ENCODE measurements at regions of chr1 and their contacts with region 1.

Region 1: DNA sequence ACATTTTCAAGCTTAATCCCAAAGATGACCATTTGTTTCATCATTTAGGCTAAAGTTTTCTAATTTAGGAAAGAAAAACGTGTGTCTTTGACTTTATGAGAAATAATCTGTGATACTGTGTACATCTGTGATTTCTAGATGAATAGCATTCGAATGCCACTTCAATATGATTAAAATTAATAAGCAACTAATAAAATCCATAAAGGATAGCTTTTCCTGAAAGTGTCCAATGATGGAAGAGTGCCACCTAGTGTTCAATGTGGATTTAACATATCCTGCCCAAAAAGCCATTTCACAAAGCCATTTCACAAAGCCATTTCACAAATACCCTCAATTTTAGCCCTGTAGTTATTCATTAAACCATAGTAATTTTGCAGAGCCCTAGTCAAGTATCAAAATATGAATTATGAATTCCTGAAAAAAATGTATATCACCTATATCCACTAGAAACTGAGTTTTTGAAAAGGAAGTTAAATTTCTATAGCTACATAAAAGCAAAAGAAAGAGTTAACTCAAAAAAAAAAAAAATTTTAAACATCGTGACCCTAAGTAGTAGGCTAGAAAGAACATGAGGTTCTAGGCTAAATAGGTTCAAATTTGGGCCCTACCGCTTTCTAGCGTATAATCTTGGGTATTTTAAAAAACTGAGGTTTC is 19.1 kb downstream of the NME7 start:
- DNase-seq: peak; percentile 27
- H3K4me3 ChIP-seq: no peak overlapping the region
- H3K27ac ChIP-seq: no peak overlapping the region
- H3K27me3 ChIP-seq: no peaks in the 10 kb centered on the region
- CTCF ChIP-seq: peak; percentile 73

Region 2: DNA sequence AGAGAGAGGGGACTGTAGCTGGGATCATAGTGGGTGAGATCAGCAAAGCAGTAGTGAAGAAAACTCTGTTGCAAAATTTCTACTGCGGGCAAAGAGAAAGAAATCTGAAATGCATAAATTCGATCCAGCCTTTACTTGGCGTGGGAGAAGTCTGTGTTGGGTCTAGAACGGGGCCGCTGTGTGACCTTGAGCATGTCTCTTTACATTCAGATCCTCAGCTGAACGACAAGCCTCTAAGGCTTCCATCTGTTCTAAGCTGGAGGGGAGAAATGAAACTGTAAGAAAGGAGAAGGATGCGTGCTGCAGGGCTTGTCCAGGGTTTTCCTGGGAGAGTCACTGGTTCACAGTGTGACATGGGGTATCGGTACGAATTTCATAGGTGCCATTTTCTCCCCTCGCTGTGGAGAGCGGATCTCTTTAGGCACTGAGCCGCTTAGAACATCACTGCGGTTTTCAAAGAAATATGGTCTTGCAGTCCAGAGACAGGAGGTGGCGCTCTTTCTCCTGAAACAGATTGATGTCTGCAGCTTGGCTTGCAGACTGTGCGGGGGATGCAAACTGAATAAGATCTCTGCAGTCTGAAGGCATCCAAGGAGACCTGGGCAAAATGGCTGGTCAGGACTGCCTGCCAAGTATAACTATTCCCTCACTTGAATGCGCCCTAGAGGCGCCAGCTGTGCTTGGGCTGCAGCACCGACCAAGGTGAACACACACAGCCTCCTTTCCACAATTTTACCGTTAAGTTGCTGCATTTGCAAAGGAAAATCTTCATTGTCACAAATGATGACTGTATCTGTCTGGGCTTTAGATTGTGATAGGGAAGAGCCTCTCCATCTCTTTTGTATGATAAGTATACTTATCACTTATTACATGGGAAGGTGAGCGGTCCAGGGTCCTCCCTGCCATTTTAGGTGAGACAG is 908.8 kb before region 1 on chr1:
- CTCF ChIA-PET with region 1: interaction called, 10 read pairs
- POLR2A ChIA-PET with region 1: no interaction called
- DNase-seq: peak; percentile 73
- H3K4me3 ChIP-seq: peak overlapping the region; percentile 18
- H3K27ac ChIP-seq: no peak overlapping the region
- H3K27me3 ChIP-seq: peaks cover 3% of the 10 kb centered on the region
- CTCF ChIP-seq: peak; percentile 90

Region 3: DNA sequence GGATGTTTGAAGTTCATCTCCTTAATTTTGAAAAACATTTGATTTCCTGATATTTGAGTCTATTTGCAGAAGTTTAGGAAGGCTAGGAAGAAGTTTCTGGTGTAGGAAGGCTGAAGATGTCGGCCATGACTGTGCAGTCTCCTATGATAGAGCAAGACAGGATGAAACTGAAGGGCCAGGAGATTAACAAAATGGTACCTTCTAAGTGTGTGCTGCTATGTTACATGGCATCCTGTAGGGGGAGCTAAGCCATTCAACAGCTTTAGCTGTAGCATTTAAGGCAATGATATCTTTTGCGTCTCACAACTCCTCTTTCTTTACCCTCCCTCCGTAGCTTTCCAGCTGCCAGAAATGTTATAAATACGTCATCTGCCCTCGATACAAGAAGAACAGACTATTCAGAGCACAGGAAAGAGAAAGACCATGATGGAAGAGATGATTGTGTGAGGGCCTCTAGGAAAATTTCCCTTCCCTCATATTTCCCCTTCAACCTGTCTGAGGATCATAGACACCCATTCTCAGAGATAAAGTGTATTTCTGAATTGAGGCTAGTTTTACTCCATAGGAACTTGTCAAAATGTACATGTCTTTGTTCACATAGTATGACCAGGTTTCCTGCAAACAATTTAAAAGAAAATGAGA is 711.0 kb before region 1 on chr1:
- CTCF ChIA-PET with region 1: interaction called, 10 read pairs
- POLR2A ChIA-PET with region 1: no interaction called
- DNase-seq: no peak
- H3K4me3 ChIP-seq: no peak overlapping the region
- H3K27ac ChIP-seq: no peak overlapping the region
- H3K27me3 ChIP-seq: no peaks in the 10 kb centered on the region
- CTCF ChIP-seq: peak; percentile 64

Region 4: GRCh38 chr1:169106095-169106920 is 242.2 kb before region 1 on chr1 and contains the start of gene ATP1B1:
- CTCF ChIA-PET with region 1: interaction called, 14 read pairs
- POLR2A ChIA-PET with region 1: interaction called, 4 read pairs
- DNase-seq: peak; percentile 26
- H3K4me3 ChIP-seq: peak within 1 kb of the TSS; percentile 82
- H3K27ac ChIP-seq: peak within 1 kb of the TSS; percentile 52
- H3K27me3 ChIP-seq: peaks cover 6% of the 10 kb centered on the region
- CTCF ChIP-seq: peak; percentile 32; the same call in 1 of the 2 replicates
- polyA plus RNA-seq, gene ATP1B1: 17.6 and 25.0 TPM in 2 replicates

Region 5: DNA sequence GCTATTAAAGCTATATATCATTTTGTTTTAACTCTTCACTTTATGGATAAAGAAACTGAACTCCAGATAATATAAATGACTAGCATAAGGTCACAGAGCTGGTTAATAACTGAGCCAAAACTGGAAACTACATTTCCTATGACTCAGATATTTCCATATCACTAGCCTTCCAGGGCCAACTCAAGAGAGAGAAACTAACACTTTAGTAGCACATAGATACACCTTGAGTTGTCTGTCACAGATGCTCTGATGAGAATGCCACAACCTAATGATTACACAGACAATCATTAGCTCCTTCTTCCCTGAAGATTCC is 21.6 kb before region 1 on chr1:
- CTCF ChIA-PET with region 1: interaction called, 18 read pairs
- POLR2A ChIA-PET with region 1: interaction called, 3 read pairs
- DNase-seq: no peak
- H3K4me3 ChIP-seq: no peak overlapping the region
- H3K27ac ChIP-seq: no peak overlapping the region
- H3K27me3 ChIP-seq: no peaks in the 10 kb centered on the region
- CTCF ChIP-seq: no peak

Region 6: DNA sequence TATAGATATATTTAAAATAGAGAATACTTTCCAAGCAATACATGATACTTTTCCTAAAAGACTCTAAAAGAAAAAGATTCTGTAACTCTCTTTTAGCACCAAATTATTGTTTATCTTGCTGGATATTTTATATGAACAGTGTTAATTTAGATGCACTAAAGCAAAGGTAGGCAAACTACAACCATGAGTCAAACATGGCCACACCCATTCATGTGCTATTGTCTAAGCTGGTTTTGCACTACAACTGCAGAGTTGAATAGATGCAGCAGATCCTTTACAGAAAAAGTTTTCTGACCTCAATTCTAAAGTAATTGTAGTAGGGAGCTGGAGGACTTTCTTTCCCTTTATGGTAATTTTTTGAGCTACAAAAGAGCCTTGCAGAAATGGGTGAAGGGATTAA is 38.9 kb after region 1 on chr1:
- CTCF ChIA-PET with region 1: no interaction called
- POLR2A ChIA-PET with region 1: no interaction called
- DNase-seq: no peak
- H3K4me3 ChIP-seq: no peak overlapping the region
- H3K27ac ChIP-seq: no peak overlapping the region
- H3K27me3 ChIP-seq: no peaks in the 10 kb centered on the region
- CTCF ChIP-seq: no peak